ENCODE measurements at regions of chr5 and their contacts with region 1.

Region 1: DNA sequence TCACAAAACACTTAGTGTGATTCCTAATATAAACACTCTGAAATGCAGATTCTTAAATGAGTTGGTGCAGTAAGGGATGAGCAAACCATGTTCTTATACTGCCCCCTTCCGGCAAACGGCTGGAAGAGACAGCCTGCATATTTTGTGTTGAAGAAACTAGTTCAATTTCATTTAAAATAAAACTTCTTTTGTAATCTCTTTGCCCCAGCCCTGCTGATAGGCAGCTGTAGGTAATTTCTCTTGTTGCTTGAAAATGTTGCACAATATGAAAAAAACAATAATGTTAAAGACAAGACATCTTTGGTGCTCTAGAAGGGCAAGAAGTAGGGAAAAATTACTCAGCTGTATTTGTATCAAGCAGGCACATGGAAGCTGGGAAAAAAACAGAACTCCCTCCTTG is 89.7 kb upstream of the CCNG1 start:
- DNase-seq: peak; percentile 27 to 69
- H3K4me3 ChIP-seq: no peak overlapping the region
- H3K27ac ChIP-seq: no peak overlapping the region
- H3K4me1 ChIP-seq: peaks cover 0 to 4% (median 0%) of the 10 kb centered on the region in 4 experiments; a peak in 2 of 7 replicates
- H3K27me3 ChIP-seq: no peaks in the 10 kb centered on the region
- CTCF ChIP-seq: peak in 2 of 3 experiments; percentile 76; a peak in 3 of 4 replicates
- EP300 ChIP-seq: no peak
- POLR2A ChIP-seq: no peak
- RAD21 ChIP-seq: peak; percentile 95

Region 2: DNA sequence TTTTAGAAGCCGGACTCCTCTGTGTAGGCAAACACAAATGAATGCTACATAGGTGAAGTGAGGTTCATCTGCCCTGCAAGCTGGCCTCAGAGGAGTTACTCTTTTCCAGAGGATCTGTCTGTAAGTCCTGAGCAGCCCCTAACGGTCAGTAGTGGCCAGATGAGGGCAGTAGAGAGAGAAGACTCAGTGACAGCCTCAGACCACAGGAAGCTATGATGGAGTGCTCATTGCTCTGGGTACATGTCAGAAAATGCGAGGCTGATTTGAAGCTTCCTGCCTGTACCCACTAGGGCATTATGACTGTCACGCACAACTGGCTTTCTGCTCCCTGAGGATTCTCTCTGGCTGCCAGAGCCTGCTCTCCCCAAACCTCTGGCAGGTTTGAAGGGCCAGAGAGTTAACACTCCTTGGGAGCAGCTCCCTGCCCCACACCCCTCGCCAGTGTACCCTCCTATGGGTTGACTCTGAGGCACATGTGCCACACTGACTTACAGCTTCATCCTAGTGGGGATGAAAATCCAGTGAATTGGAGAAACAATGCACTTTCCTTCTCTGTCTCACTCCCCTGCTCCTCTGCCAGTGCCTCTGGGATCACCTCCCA is 1138.6 kb before region 1 on chr5:
- CTCF ChIA-PET with region 1: interaction called, 12 read pairs
- POLR2A ChIA-PET with region 1: no interaction called
- DNase-seq: peak; percentile 60 to 70
- H3K4me3 ChIP-seq: no peak overlapping the region
- H3K27ac ChIP-seq: no peak overlapping the region
- H3K4me1 ChIP-seq: no peaks in the 10 kb centered on the region
- H3K27me3 ChIP-seq: no peaks in the 10 kb centered on the region; a peak in 1 of 7 replicates
- CTCF ChIP-seq: peak; percentile 55 to 90 (median 80)
- EP300 ChIP-seq: no peak
- POLR2A ChIP-seq: no peak
- RAD21 ChIP-seq: peak; percentile 79 to 81

Region 3: GRCh38 chr5:163079618-163080017 is 268.1 kb before region 1 on chr5:
- CTCF ChIA-PET with region 1: interaction called, 25 read pairs
- POLR2A ChIA-PET with region 1: no interaction called
- DNase-seq: no peak
- H3K4me3 ChIP-seq: no peak overlapping the region
- H3K27ac ChIP-seq: no peak overlapping the region
- H3K4me1 ChIP-seq: no peaks in the 10 kb centered on the region
- H3K27me3 ChIP-seq: no peaks in the 10 kb centered on the region
- CTCF ChIP-seq: peak in 2 of 3 experiments; percentile 31 to 55; a peak in 2 of 4 replicates
- EP300 ChIP-seq: no peak
- POLR2A ChIP-seq: no peak
- RAD21 ChIP-seq: peak; percentile 42 to 43

Region 4: DNA sequence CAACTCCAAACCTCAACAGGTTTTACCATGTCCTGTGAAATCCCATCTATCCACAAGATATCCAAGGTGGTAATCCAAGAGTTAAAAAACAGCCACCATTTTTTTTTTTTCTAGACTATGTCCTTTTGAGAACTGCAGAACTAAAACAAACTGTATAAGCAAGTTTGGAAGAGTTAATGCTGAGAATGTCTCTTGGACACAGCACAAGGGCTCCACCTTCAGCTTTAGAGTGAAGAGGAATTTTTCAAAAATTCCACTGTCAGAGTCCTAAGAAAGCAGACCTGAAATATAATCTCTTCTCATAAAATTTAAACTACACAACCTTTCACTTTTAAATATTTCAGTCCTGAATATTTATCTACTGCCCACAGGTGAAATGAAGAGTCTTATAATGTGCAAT is 78.0 kb before region 1 on chr5:
- CTCF ChIA-PET with region 1: interaction called, 11 read pairs
- POLR2A ChIA-PET with region 1: no interaction called
- DNase-seq: no peak
- H3K4me3 ChIP-seq: no peak overlapping the region
- H3K27ac ChIP-seq: no peak overlapping the region
- H3K4me1 ChIP-seq: no peaks in the 10 kb centered on the region
- H3K27me3 ChIP-seq: no peaks in the 10 kb centered on the region
- CTCF ChIP-seq: peak in 1 of 3 experiments; percentile 16; a peak in 1 of 4 replicates
- EP300 ChIP-seq: no peak
- POLR2A ChIP-seq: no peak
- RAD21 ChIP-seq: peak; percentile 67 to 69

Region 5: GRCh38 chr5:163408311-163408923 is 60.7 kb after region 1 on chr5:
- CTCF ChIA-PET with region 1: interaction called, 64 read pairs
- POLR2A ChIA-PET with region 1: no interaction called
- DNase-seq: peak in 1 of 2 experiments; percentile 75
- H3K4me3 ChIP-seq: no peak overlapping the region
- H3K27ac ChIP-seq: no peak overlapping the region
- H3K4me1 ChIP-seq: no peaks in the 10 kb centered on the region
- H3K27me3 ChIP-seq: no peaks in the 10 kb centered on the region
- CTCF ChIP-seq: peak; percentile 36 to 87 (median 80)
- EP300 ChIP-seq: no peak
- POLR2A ChIP-seq: no peak
- RAD21 ChIP-seq: peak; percentile 92 to 94

Measured in H1 (cell line).